Left ventricle myocardium inferior (tissue), 1 donor: ENCODE measurements at regions of chr9 and their contacts with region 1.

Region 1: GRCh38 chr9:93566408-93567270 is 9.7 kb upstream of the PHF2 start:
- DNase-seq: peak; percentile 99
- H3K4me3 ChIP-seq: peak overlapping the region; percentile 78
- H3K27ac ChIP-seq: peak overlapping the region; percentile 99
- H3K4me1 ChIP-seq: peaks cover 18% of the 10 kb centered on the region
- H3K27me3 ChIP-seq: no peaks in the 10 kb centered on the region
- CTCF ChIP-seq: peak; percentile 97

Region 2: GRCh38 chr9:93245122-93245970 is 321.3 kb before region 1 on chr9:
- intact Hi-C with region 1: no loop called
- DNase-seq: no peak
- H3K4me3 ChIP-seq: no peak overlapping the region
- H3K27ac ChIP-seq: peak overlapping the region; percentile 27
- H3K4me1 ChIP-seq: peaks cover 44% of the 10 kb centered on the region
- H3K27me3 ChIP-seq: no peaks in the 10 kb centered on the region
- CTCF ChIP-seq: no peak

Region 3: DNA sequence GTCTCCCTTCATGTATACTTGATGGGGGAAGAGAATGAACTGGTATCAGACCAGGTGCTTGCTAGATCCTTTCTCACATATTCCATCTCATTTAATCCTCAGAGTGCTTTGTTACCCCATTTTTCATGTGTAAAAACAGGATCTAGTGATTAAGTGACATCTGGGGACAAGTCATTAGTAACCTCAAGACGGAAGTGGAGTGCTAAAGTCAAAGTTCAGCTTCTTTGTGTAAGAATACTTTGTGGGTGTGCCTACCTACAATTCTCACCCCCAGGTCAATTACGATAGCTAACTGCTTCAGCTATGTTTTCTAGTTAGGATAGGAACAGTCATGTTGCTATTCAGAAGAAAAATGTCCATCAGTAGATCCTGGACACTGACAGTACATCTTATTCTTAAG is 110.1 kb before region 1 on chr9:
- intact Hi-C with region 1: loop called (anchors 5 kb)
- DNase-seq: no peak
- H3K4me3 ChIP-seq: no peak overlapping the region
- H3K27ac ChIP-seq: peak overlapping the region; percentile 98
- H3K4me1 ChIP-seq: peaks cover 94% of the 10 kb centered on the region
- H3K27me3 ChIP-seq: no peaks in the 10 kb centered on the region
- CTCF ChIP-seq: no peak